PC-3 (cell line): ENCODE measurements at regions of chr7 and their contacts with region 1.

Region 1: GRCh38 chr7:105990726-105991453 is 27.8 kb downstream of the CDHR3 start:
- DNase-seq: no peak
- ATAC-seq: no peak
- H3K4me3 ChIP-seq: no peak overlapping the region
- H3K27ac ChIP-seq: no peak overlapping the region
- H3K4me1 ChIP-seq: no peaks in the 10 kb centered on the region
- H3K27me3 ChIP-seq: peaks cover 9% of the 10 kb centered on the region
- CTCF ChIP-seq: no peak

Region 2: DNA sequence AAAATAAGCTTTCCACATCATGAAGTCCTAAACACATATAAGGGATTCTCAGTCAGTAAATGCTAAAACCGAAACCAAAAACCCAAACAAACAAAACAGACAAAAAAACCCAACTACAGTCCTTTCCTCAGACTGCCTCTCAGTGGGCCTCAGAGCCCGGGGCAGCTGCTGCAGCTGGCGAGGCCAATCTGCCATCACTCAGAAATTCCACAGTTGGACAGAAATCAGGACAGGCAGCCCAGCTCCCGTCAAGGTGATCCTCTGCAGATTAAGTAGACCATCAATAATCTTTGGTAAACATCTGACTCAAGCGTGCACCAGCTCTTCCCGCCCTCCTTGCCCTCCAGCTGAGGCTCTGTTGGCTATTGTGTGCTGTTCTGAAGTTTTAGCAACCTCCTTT is 256.7 kb before region 1 on chr7:
- CTCF ChIA-PET with region 1: no interaction called
- POLR2A ChIA-PET with region 1: no interaction called
- intact Hi-C with region 1: no loop called
- DNase-seq: peak; percentile 89
- ATAC-seq: peak; percentile 99
- H3K4me3 ChIP-seq: no peak overlapping the region
- H3K27ac ChIP-seq: no peak overlapping the region
- H3K4me1 ChIP-seq: peaks cover 13% of the 10 kb centered on the region
- H3K27me3 ChIP-seq: no peaks in the 10 kb centered on the region
- CTCF ChIP-seq: no peak

Region 3: GRCh38 chr7:105963038-105963667 is 27.7 kb before region 1 on chr7 and contains the start of gene CDHR3:
- CTCF ChIA-PET with region 1: interaction called, 19 read pairs
- POLR2A ChIA-PET with region 1: no interaction called
- intact Hi-C with region 1: no loop called
- DNase-seq: no peak
- ATAC-seq: peak; percentile 38; the same call in 1 of the 2 replicates
- H3K4me3 ChIP-seq: no peak within 1 kb of the TSS
- H3K27ac ChIP-seq: no peak within 1 kb of the TSS
- H3K4me1 ChIP-seq: no peaks in the 10 kb centered on the region
- H3K27me3 ChIP-seq: no peaks in the 10 kb centered on the region
- CTCF ChIP-seq: no peak
- total RNA-seq, gene CDHR3: 5.9 and 9.8 TPM in 2 replicates